A673 (cell line): ENCODE measurements at regions of chr10 and their contacts with region 1.

Region 1: DNA sequence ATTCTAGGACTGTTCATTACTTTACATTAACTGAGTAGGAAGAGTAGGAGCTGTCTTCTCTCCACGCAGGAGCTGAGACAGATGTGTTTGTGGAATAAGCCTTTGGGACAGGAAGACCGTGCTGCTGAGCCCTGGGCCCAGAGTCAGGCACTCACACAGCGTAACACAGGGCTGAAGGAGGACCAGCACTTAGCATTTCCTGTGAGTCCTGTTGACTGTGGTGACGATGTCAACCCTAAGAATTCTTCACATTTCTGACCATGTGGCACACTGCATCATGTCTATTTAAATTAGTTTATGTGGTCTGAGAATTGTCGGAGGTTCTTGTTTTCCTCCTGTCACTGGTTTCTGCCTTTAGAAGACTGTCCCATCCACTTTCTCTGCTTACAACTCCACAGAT is 117.2 kb downstream of the PIP4K2A start:
- DNase-seq: no peak
- H3K4me3 ChIP-seq: no peak overlapping the region
- H3K27ac ChIP-seq: no peak overlapping the region
- H3K4me1 ChIP-seq: peaks cover 60% of the 10 kb centered on the region
- H3K27me3 ChIP-seq: no peaks in the 10 kb centered on the region
- CTCF ChIP-seq: no peak

Region 2: DNA sequence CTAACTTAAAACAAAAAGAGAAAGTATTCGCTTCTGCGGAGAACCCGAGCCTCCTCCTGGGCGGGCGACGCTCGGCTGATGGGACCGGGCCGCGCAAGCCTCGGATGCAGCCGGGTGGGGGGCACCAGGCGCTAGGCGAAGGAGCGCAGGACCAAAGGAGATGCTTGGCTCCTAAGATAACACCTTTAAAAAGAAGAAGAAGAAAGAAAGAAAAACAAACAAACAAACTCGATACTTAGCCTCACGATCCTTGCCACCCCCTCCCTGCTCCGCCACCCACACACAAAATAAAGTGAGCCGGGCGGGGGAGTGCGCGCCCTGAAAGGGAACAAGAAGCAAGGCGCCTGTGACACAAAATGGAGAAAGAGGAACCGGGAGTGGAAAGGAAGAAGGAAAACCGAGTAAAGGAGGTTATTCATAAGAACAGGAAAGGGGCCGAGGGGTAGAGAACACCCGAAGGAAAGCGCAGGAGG is 345.4 kb before region 1 on chr10:
- CTCF ChIA-PET with region 1: no interaction called
- POLR2A ChIA-PET with region 1: no interaction called
- intact Hi-C with region 1: loop called (anchors 10 kb)
- DNase-seq: peak; percentile 77
- H3K4me3 ChIP-seq: peak overlapping the region; percentile 55
- H3K27ac ChIP-seq: peak overlapping the region; percentile 86
- H3K4me1 ChIP-seq: peaks cover 35% of the 10 kb centered on the region
- H3K27me3 ChIP-seq: no peaks in the 10 kb centered on the region
- CTCF ChIP-seq: no peak

Region 3: DNA sequence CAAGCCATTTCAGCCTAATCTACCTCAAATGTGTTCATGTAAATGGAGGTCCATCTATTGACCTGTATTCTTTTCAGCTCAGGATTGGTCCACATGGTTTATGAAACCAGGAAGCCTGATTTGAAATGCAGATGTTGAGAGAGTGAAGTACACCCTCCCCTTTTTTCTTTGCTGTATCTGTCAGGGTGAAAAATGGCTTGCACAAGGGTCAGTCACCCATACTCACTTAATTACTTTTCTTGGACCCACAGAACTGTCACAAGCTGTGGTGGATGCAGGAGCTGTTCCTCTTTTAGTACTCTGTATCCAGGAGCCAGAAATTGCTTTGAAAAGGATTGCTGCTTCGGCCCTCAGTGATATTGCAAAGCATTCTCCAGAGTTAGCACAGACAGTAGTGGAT is 210.6 kb before region 1 on chr10:
- CTCF ChIA-PET with region 1: no interaction called
- POLR2A ChIA-PET with region 1: no interaction called
- intact Hi-C with region 1: no loop called
- DNase-seq: no peak
- H3K4me3 ChIP-seq: no peak overlapping the region
- H3K27ac ChIP-seq: no peak overlapping the region
- H3K4me1 ChIP-seq: no peaks in the 10 kb centered on the region
- H3K27me3 ChIP-seq: no peaks in the 10 kb centered on the region
- CTCF ChIP-seq: no peak

Region 4: GRCh38 chr10:22615819-22616499 is 18.8 kb after region 1 on chr10:
- CTCF ChIA-PET with region 1: no interaction called
- POLR2A ChIA-PET with region 1: interaction called, 5 read pairs
- intact Hi-C with region 1: loop called (anchors 2 kb)
- DNase-seq: no peak
- H3K4me3 ChIP-seq: no peak overlapping the region
- H3K27ac ChIP-seq: no peak overlapping the region
- H3K4me1 ChIP-seq: peaks cover 58% of the 10 kb centered on the region
- H3K27me3 ChIP-seq: no peaks in the 10 kb centered on the region
- CTCF ChIP-seq: no peak

Region 5: GRCh38 chr10:22629126-22629525 is 32.0 kb after region 1 on chr10:
- CTCF ChIA-PET with region 1: no interaction called
- POLR2A ChIA-PET with region 1: no interaction called
- intact Hi-C with region 1: no loop called
- DNase-seq: no peak
- H3K4me3 ChIP-seq: no peak overlapping the region
- H3K27ac ChIP-seq: no peak overlapping the region
- H3K4me1 ChIP-seq: peaks cover 56% of the 10 kb centered on the region
- H3K27me3 ChIP-seq: no peaks in the 10 kb centered on the region
- CTCF ChIP-seq: no peak

Region 6: DNA sequence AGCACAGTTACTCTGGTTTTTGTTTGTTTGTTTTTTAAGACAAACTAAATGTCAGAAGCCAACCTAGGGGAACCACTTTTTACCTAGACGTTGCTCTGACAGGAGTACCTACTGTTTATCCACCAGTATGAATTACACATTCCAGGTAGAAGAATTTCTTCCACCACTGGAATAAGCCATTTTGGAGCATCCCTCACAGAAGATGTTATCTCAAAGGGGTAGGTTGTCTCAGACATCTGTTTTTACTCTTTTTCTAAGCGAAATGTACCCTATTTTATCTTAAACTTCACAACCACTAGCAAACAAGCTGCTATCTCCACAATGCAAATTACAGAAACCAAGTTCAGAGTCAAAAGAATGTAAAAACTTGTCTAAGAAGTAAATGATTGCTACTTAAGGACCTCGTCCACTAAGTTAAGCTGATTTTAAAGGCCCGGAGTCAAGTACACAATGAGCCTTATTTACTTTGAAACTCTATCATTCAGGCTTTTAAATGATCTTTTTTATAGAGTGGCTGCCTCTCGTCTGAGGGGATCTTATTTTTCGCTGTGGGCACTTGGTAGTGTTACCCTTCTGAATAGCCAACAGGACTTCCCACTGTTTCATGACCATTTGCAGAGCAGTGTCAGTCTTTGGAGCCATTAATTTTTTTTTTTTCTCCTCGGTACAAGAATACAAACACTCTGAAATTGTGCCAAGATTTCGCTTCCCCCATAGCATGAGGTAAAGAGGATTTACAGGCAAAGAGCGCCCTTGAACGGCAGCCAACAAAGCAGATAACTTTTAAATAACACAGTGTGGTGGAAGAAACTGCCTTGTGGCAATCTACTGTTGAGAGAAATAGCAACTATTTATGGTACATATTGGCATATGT is 315.0 kb after region 1 on chr10:
- CTCF ChIA-PET with region 1: no interaction called
- POLR2A ChIA-PET with region 1: no interaction called
- intact Hi-C with region 1: loop called (anchors 10 kb)
- DNase-seq: peak; percentile 96
- H3K4me3 ChIP-seq: no peak overlapping the region
- H3K27ac ChIP-seq: no peak overlapping the region
- H3K4me1 ChIP-seq: peaks cover 20% of the 10 kb centered on the region
- H3K27me3 ChIP-seq: no peaks in the 10 kb centered on the region
- CTCF ChIP-seq: peak; percentile 41; the same call in 1 of the 2 replicates

Region 7: DNA sequence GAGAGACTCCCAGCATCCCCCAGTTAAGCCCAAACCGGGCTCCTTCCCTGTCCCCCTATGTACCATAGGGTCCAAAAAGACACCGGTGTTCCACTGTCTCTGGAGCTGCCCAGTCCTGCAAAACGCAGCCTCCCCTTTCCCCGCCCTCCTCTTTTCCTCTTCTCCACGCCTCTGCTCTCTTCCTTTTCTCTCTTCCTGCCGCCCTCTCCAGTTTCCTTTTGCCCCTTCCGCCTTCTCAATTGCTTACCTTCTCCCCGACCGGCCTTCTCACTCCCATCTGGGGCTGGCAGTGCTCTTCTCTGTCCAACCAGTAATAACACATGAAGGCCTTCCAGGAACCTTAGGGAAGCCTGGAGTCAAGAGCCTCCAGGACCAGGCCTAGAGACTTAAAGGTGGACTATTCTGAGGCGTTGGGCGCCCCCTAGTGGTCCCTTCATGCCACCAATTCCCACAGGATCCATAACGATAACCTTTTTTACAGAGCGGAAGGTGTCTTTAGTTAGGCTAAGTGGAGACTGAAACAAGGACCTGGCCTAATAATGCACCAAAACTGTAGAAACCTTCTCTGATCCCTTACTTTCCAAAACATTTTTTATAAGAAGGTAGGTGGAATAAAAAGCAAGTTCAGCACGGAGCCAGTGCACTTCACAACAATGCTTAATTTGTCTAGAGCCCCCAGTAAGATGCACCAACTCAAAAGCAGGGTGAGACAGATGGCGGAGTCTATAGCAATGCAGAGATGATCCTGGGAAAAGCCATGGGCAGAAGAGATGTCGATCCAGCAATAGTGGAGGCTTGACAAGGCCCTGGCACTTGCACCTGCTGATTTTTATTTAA is 471.0 kb after region 1 on chr10:
- CTCF ChIA-PET with region 1: no interaction called
- POLR2A ChIA-PET with region 1: no interaction called
- intact Hi-C with region 1: no loop called
- DNase-seq: peak; percentile 79
- H3K4me3 ChIP-seq: no peak overlapping the region
- H3K27ac ChIP-seq: no peak overlapping the region
- H3K4me1 ChIP-seq: peaks cover 5% of the 10 kb centered on the region
- H3K27me3 ChIP-seq: no peaks in the 10 kb centered on the region
- CTCF ChIP-seq: peak; percentile 89